A673 (cell line): ENCODE measurements at regions of chr15 and their contacts with region 1.

Region 1: DNA sequence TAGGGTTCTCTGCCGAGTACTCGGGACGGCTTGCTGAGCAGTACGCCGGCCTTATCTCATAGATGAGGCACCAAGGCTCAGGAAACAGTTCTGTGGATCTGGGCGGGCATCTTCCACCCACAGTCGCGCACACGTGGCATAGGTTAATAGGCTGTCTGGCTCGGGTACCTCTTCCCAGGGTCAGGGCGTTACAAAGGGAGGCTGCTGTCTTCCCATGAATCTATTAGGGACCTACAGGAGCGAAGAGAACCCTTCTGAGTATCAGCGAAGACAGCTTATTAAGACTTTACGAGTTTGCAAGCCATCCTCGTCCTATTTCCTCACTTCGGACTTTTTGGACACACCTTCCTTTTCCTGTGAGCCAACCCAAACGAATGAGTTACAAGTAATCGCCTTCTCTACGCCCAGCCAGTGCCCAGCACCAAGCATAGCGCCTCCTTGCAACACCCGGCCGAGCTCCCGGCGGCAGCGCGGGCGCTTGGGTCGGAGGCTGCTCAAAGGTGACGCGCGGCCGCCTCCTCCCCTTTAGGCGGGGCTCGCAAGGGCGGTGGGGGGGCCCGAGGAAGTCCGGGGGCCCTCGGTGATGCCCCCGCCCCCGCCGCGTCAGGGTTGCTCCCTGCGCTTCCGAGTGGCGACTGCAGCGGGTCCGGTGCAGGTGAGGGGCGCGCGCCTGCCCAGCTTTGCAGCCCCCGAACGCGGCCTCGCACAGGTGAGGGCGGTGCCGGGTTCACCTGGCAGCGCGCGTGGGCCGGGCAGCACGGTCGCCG is at the start of gene MCTP2:
- DNase-seq: peak; percentile 37
- H3K4me3 ChIP-seq: peak within 1 kb of the TSS; percentile 45
- H3K27ac ChIP-seq: no peak within 1 kb of the TSS
- H3K4me1 ChIP-seq: no peaks in the 10 kb centered on the region
- H3K27me3 ChIP-seq: peaks cover 21% of the 10 kb centered on the region
- CTCF ChIP-seq: 0 out of 2 replicates have a peak, but pooled peaks have one; percentile 24
- total RNA-seq, gene MCTP2: 0.19 and 0.33 TPM in 2 replicates

Region 2: GRCh38 chr15:94135486-94136145 is 95.5 kb before region 1 on chr15:
- CTCF ChIA-PET with region 1: interaction called, 15 read pairs
- POLR2A ChIA-PET with region 1: no interaction called
- intact Hi-C with region 1: no loop called
- DNase-seq: peak; percentile 60
- H3K4me3 ChIP-seq: no peak overlapping the region
- H3K27ac ChIP-seq: no peak overlapping the region
- H3K4me1 ChIP-seq: no peaks in the 10 kb centered on the region
- H3K27me3 ChIP-seq: no peaks in the 10 kb centered on the region
- CTCF ChIP-seq: peak; percentile 47; the same call in 1 of the 2 replicates